Naive thymus-derived CD4-positive, alpha-beta T cell (primary cell): ENCODE measurements at regions of chr18 and their contacts with region 1.

Region 1: DNA sequence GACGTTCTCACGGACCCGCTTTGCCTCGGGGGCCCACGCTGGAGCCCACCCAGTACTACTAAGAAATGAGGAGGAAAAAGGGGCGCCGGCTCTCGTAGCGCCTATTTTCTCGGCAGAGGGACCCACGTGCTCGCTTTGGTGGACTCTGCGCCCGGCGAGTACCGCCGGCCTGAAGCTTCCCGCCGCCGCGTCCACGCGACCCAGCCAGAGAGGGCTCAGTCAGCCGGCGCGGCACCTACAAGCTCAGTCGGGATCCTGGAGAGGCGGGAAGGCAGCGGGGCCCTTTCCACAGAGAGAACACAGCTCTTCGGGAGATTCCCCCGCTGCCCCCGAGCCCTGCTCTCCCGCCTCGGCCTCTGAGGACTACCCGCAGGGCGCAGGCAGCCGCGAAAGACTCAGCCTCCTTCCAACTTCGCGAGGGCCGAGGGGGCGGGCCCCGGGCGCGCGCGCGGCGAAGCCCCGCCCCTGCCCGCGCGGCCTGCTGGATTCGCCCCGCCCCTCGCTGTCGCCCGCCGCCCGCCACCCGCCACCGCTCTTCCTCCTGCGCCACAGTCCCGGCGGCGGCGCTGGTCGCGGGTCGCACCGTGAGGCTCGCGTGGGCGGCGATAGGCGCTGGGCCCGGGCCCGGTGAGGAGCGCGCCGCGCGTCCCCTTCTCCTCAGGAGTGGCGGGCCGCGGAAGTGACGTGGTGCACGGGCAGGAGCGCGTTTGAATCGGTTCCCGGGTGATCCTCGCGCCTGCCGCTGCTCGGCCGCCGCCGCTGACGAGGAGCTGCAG is at the start of gene SMCHD1:
- DNase-seq: peak; percentile 83 to 95 (median 90)
- ATAC-seq: peak; percentile 88
- H3K4me3 ChIP-seq: peak within 1 kb of the TSS; percentile 97
- H3K4me3 Mint-ChIP-seq: peak within 1 kb of the TSS; percentile 91 to 99 (median 95)
- H3K27ac ChIP-seq: peak within 1 kb of the TSS; percentile 100
- H3K27ac Mint-ChIP-seq: peak within 1 kb of the TSS; percentile 91 to 99 (median 96)
- H3K4me1 ChIP-seq: peaks cover 23 to 38% of the 10 kb centered on the region in 2 donors
- H3K4me1 Mint-ChIP-seq: peaks cover 23 to 66% (median 50%) of the 10 kb centered on the region in 7 donors
- H3K27me3 ChIP-seq: no peaks in the 10 kb centered on the region
- H3K27me3 Mint-ChIP-seq: no peaks in the 10 kb centered on the region
- total RNA-seq, gene SMCHD1: 181 to 305 (median 236) TPM

Region 2: GRCh38 chr18:812376-813171 is 1842.8 kb before region 1 on chr18:
- CTCF ChIA-PET with region 1: no interaction called
- POLR2A ChIA-PET with region 1: no interaction called
- intact Hi-C with region 1: loop called in 1 of 2 experiments (anchors 5 kb)
- DNase-seq: peak; percentile 70 to 86 (median 84)
- ATAC-seq: peak; percentile 81
- H3K4me3 ChIP-seq: peak overlapping the region; percentile 60
- H3K4me3 Mint-ChIP-seq: peak overlapping the region; percentile 90 to 98 (median 95)
- H3K27ac ChIP-seq: peak overlapping the region; percentile 94
- H3K27ac Mint-ChIP-seq: peak overlapping the region; percentile 94 to 100 (median 98)
- H3K4me1 ChIP-seq: peaks cover 31 to 36% of the 10 kb centered on the region in 2 donors
- H3K4me1 Mint-ChIP-seq: peaks cover 36 to 78% (median 71%) of the 10 kb centered on the region in 7 donors
- H3K27me3 ChIP-seq: no peaks in the 10 kb centered on the region
- H3K27me3 Mint-ChIP-seq: peaks cover 0 to 6% (median 0%) of the 10 kb centered on the region in 5 donors

Region 3: GRCh38 chr18:2589345-2590068 is 65.9 kb before region 1 on chr18:
- CTCF ChIA-PET with region 1: interaction called, 6 read pairs
- POLR2A ChIA-PET with region 1: interaction called, 135 read pairs
- intact Hi-C with region 1: loop called (anchors 1 to 5 kb)
- DNase-seq: peak in 5 of 9 donors; percentile 24 to 58 (median 49)
- ATAC-seq: peak; percentile 70
- H3K4me3 ChIP-seq: peak overlapping the region; percentile 44
- H3K4me3 Mint-ChIP-seq: peak overlapping the region in 9 of 10 donors; percentile 65 to 93 (median 80)
- H3K27ac ChIP-seq: peak overlapping the region; percentile 78
- H3K27ac Mint-ChIP-seq: peak overlapping the region; percentile 85 to 96 (median 92)
- H3K4me1 ChIP-seq: peaks cover 31 to 48% of the 10 kb centered on the region in 2 donors
- H3K4me1 Mint-ChIP-seq: peaks cover 12 to 66% (median 60%) of the 10 kb centered on the region in 7 donors
- H3K27me3 ChIP-seq: no peaks in the 10 kb centered on the region
- H3K27me3 Mint-ChIP-seq: no peaks in the 10 kb centered on the region

Region 4: GRCh38 chr18:2627821-2628276 is 27.5 kb before region 1 on chr18:
- CTCF ChIA-PET with region 1: no interaction called
- POLR2A ChIA-PET with region 1: interaction called, 16 read pairs
- intact Hi-C with region 1: no loop called
- DNase-seq: no peak
- ATAC-seq: peak; percentile 83
- H3K4me3 ChIP-seq: no peak overlapping the region
- H3K4me3 Mint-ChIP-seq: peak overlapping the region in 1 of 10 donors; percentile 35
- H3K27ac ChIP-seq: no peak overlapping the region
- H3K27ac Mint-ChIP-seq: peak overlapping the region in 3 of 9 donors; percentile 38 to 52 (median 47)
- H3K4me1 ChIP-seq: peaks cover 0 to 5% of the 10 kb centered on the region in 2 donors
- H3K4me1 Mint-ChIP-seq: peaks cover 11 to 38% (median 26%) of the 10 kb centered on the region in 7 donors
- H3K27me3 ChIP-seq: no peaks in the 10 kb centered on the region
- H3K27me3 Mint-ChIP-seq: no peaks in the 10 kb centered on the region

Region 5: DNA sequence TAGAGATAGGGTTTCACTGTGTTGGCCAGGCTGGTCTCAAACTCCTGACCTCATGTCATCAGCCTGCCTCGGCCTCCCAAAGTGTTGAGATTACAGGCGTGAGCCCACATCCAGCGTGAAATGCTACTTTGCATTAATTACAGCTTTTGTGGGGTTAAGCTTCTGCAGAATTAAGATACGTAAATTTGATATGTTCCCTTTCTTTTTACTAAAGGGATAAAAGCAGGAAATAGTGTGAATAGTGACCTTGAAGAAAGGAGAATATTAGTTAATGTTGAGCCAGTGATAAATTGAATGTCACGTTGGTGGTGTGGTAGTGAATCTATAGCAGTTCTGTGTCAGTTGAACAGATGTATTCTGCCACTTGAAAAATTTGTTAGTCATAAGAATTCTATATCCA is 17.0 kb after region 1 on chr18:
- CTCF ChIA-PET with region 1: no interaction called
- POLR2A ChIA-PET with region 1: interaction called, 10 read pairs
- intact Hi-C with region 1: no loop called
- DNase-seq: no peak
- ATAC-seq: no peak
- H3K4me3 ChIP-seq: no peak overlapping the region
- H3K4me3 Mint-ChIP-seq: peak overlapping the region in 2 of 10 donors; percentile 37 to 41
- H3K27ac ChIP-seq: no peak overlapping the region
- H3K27ac Mint-ChIP-seq: peak overlapping the region in 3 of 9 donors; percentile 17 to 85 (median 71)
- H3K4me1 ChIP-seq: peaks cover 0 to 10% of the 10 kb centered on the region in 2 donors
- H3K4me1 Mint-ChIP-seq: peaks cover 35 to 84% (median 79%) of the 10 kb centered on the region in 7 donors
- H3K27me3 ChIP-seq: no peaks in the 10 kb centered on the region
- H3K27me3 Mint-ChIP-seq: no peaks in the 10 kb centered on the region

Region 6: GRCh38 chr18:2958819-2959298 is 303.5 kb after region 1 on chr18:
- CTCF ChIA-PET with region 1: no interaction called
- POLR2A ChIA-PET with region 1: no interaction called
- intact Hi-C with region 1: loop called (anchors 1 to 5 kb)
- DNase-seq: peak in 1 of 9 donors; percentile 61
- ATAC-seq: no peak
- H3K4me3 ChIP-seq: peak overlapping the region; percentile 8
- H3K4me3 Mint-ChIP-seq: peak overlapping the region; percentile 1 to 85 (median 66)
- H3K27ac ChIP-seq: peak overlapping the region; percentile 68
- H3K27ac Mint-ChIP-seq: peak overlapping the region; percentile 96 to 100 (median 99)
- H3K4me1 ChIP-seq: peaks cover 83 to 85% of the 10 kb centered on the region in 2 donors
- H3K4me1 Mint-ChIP-seq: peaks cover 46 to 97% (median 93%) of the 10 kb centered on the region in 7 donors
- H3K27me3 ChIP-seq: no peaks in the 10 kb centered on the region
- H3K27me3 Mint-ChIP-seq: no peaks in the 10 kb centered on the region

Region 7: GRCh38 chr18:3447895-3448837 is 792.8 kb after region 1 on chr18:
- CTCF ChIA-PET with region 1: no interaction called
- POLR2A ChIA-PET with region 1: interaction called, 4 read pairs
- intact Hi-C with region 1: loop called in 1 of 2 experiments (anchors 1 kb)
- DNase-seq: peak; percentile 73 to 89 (median 84)
- ATAC-seq: peak; percentile 73
- H3K4me3 ChIP-seq: peak overlapping the region; percentile 78
- H3K4me3 Mint-ChIP-seq: peak overlapping the region; percentile 85 to 97 (median 96)
- H3K27ac ChIP-seq: peak overlapping the region; percentile 96
- H3K27ac Mint-ChIP-seq: peak overlapping the region; percentile 96 to 100 (median 99)
- H3K4me1 ChIP-seq: peaks cover 13% of the 10 kb centered on the region in 2 donors
- H3K4me1 Mint-ChIP-seq: peaks cover 5 to 35% (median 23%) of the 10 kb centered on the region in 7 donors
- H3K27me3 ChIP-seq: no peaks in the 10 kb centered on the region
- H3K27me3 Mint-ChIP-seq: peaks cover 0 to 1% (median 0%) of the 10 kb centered on the region in 5 donors